ENCODE measurements at regions of chr1 and their contacts with region 1.

Region 1: GRCh38 chr1:89757532-89757931 is 63.3 kb upstream of the LRRC8D start:
- DNase-seq: peak; percentile 86
- H3K4me3 Mint-ChIP-seq: peak overlapping the region; percentile 74
- H3K27ac Mint-ChIP-seq: peak overlapping the region; percentile 90
- H3K4me1 Mint-ChIP-seq: peaks cover 81% of the 10 kb centered on the region
- H3K27me3 Mint-ChIP-seq: no peaks in the 10 kb centered on the region

Region 2: DNA sequence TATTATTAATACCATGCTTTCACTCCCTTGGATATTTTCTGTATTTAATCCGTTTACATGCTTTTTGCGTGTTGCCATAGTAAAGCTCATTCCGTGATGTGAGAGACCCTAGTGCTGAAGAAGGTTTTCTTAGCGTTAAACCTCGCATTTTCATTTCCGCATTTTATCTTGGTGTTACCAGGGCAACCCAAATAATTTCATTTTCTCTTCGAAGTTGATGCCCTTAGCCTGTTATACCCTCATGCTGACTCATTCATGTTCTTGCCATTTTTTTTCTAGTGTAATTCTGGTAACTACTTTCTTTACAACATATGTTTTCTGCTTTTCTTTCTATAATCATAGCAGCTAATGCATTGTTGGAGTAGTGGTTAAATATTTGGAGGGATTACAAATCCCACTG is 87.4 kb before region 1 on chr1:
- intact Hi-C with region 1: no loop called
- DNase-seq: peak; percentile 70
- H3K4me3 Mint-ChIP-seq: peak overlapping the region; percentile 30
- H3K27ac Mint-ChIP-seq: peak overlapping the region; percentile 74
- H3K4me1 Mint-ChIP-seq: peaks cover 73% of the 10 kb centered on the region
- H3K27me3 Mint-ChIP-seq: no peaks in the 10 kb centered on the region

Region 3: GRCh38 chr1:89739013-89739843 is 18.3 kb before region 1 on chr1:
- intact Hi-C with region 1: loop called (anchors 2 kb)
- DNase-seq: peak; percentile 76
- H3K4me3 Mint-ChIP-seq: peak overlapping the region; percentile 78
- H3K27ac Mint-ChIP-seq: peak overlapping the region; percentile 94
- H3K4me1 Mint-ChIP-seq: peaks cover 40% of the 10 kb centered on the region
- H3K27me3 Mint-ChIP-seq: no peaks in the 10 kb centered on the region

Measured in activated CD4-positive, alpha-beta T cell treated with anti-CD3 and anti-CD28 coated beads, Interleukin-2, amount 10 ng/mL, durations not matched to agents 24 days and 14 days (primary cell).